Activated T-helper 1 cell treated with anti-CD3 and anti-CD28 coated beads, Interleukin-12 subunit alpha, Interleukin-12 subunit beta, Interleukin-2, Interleukin-4 antibody, amounts not matched to agents 30 ng/mL and 10 ng/mL and 1 ng/mL, durations not matched to agents 14 hours and 24 hours and 36 hours (primary cell): ENCODE measurements at regions of chr10 and their contacts with region 1.

Region 1: DNA sequence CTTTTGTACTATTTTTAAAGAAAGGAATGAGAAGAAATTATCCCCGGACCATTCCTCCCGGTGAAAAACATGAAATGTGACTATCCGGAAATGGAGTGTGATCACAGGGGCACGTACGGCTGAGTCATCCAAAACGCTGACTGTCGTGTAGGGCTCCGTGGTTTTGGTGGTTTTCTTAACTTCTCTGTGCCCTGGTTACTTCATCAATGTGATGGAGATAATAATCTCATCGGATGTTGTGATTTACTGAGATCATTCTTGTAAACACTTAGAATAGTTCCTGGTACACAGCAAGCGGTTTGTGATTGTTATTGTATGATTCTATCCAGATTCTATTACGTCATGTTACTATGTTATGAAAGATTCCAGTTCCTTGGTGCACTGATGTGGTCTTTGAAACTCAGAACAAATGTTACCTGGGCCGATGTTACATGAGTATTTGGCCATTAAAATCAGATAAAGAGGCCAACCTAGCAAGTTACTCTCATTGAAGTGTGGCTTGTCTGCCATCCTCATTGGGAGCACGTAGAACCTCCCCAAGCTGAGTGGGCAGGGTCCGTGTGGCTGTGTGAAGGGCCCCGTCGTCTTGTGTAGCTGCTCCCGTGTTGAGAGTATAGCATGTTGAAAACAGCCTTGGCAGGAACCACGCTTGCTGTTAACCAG is 99.5 kb downstream of the CAMK1D start:
- DNase-seq: peak; percentile 81
- H3K4me3 Mint-ChIP-seq: peak overlapping the region; percentile 64
- H3K27ac Mint-ChIP-seq: peak overlapping the region; percentile 72
- H3K4me1 Mint-ChIP-seq: peaks cover 31% of the 10 kb centered on the region
- H3K27me3 Mint-ChIP-seq: peaks cover 16% of the 10 kb centered on the region

Region 2: DNA sequence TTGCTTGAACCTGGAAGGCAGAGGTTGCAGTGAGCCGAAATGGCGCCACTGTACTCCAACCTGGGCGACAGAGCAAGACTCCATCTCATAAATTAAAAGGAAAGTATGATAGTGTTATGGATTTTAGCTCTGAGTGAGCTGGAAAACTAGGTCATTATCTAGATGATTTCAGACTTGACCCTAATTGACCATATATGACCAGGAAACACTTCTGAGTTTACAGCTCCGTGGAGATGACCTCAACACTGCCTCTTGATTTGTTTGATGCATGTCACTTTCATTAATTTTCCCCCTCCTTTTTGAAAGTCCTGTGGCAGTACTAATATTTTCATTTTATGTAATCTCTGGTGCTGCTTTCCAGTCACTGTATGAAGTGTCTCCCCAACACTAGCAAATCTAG is 327.2 kb before region 1 on chr10:
- intact Hi-C with region 1: loop called (anchors 5 kb)
- DNase-seq: no peak
- H3K4me3 Mint-ChIP-seq: peak overlapping the region; percentile 59
- H3K27ac Mint-ChIP-seq: peak overlapping the region; percentile 95
- H3K4me1 Mint-ChIP-seq: peaks cover 34% of the 10 kb centered on the region
- H3K27me3 Mint-ChIP-seq: no peaks in the 10 kb centered on the region

Region 3: GRCh38 chr10:12264204-12264940 is 184.5 kb before region 1 on chr10:
- intact Hi-C with region 1: loop called (anchors 1 kb)
- DNase-seq: peak; percentile 63
- H3K4me3 Mint-ChIP-seq: peak overlapping the region; percentile 82
- H3K27ac Mint-ChIP-seq: peak overlapping the region; percentile 98
- H3K4me1 Mint-ChIP-seq: peaks cover 23% of the 10 kb centered on the region
- H3K27me3 Mint-ChIP-seq: peaks cover 1% of the 10 kb centered on the region

Region 4: DNA sequence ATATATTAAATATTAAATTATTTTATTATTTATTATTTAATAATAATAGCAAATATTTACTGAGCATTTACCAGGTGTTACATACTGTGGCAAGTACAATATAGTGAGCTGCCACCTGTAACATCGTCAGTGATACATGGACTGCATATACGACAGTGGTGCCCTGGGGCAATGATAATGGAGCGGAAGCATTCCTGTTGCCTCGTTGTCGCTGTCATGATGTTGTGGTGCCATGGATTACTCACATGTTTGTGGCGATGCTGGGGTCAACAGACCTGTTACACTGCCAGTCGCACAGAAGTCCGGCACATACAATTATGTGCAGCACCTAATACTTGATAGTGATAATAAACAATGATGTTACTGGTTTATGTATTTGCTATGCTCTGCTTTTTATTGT is 78.9 kb before region 1 on chr10:
- intact Hi-C with region 1: loop called (anchors 1 kb)
- DNase-seq: no peak
- H3K4me3 Mint-ChIP-seq: no peak overlapping the region
- H3K27ac Mint-ChIP-seq: no peak overlapping the region
- H3K4me1 Mint-ChIP-seq: peaks cover 18% of the 10 kb centered on the region
- H3K27me3 Mint-ChIP-seq: no peaks in the 10 kb centered on the region

Region 5: GRCh38 chr10:12419262-12419847 is 29.5 kb before region 1 on chr10:
- intact Hi-C with region 1: loop called (anchors 1 kb)
- DNase-seq: peak; percentile 25
- H3K4me3 Mint-ChIP-seq: peak overlapping the region; percentile 5
- H3K27ac Mint-ChIP-seq: peak overlapping the region; percentile 58
- H3K4me1 Mint-ChIP-seq: peaks cover 18% of the 10 kb centered on the region
- H3K27me3 Mint-ChIP-seq: peaks cover under 1% of the 10 kb centered on the region

Region 6: DNA sequence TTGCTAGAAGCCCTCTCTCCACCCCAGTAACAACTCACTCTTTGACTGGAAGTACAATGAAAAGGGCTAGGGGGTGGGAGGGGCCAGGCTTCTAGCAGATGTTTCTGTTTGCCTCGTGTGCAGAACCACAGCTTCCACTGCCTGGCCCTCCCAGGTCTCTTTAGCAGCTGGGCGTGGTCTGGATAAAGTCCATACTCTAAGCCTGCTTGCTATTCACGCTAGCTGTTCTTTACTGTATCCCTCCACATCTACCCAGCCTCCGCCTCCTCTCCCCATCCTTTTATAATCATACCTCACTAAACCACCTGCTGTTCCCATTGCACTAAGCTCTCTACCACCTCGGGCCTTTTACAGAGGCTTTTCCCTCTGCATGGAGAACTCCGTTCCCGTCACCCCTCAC is 189.2 kb after region 1 on chr10:
- intact Hi-C with region 1: loop called (anchors 2 kb)
- DNase-seq: peak; percentile 49
- H3K4me3 Mint-ChIP-seq: peak overlapping the region; percentile 24
- H3K27ac Mint-ChIP-seq: peak overlapping the region; percentile 64
- H3K4me1 Mint-ChIP-seq: peaks cover 61% of the 10 kb centered on the region
- H3K27me3 Mint-ChIP-seq: peaks cover 2% of the 10 kb centered on the region

Region 7: DNA sequence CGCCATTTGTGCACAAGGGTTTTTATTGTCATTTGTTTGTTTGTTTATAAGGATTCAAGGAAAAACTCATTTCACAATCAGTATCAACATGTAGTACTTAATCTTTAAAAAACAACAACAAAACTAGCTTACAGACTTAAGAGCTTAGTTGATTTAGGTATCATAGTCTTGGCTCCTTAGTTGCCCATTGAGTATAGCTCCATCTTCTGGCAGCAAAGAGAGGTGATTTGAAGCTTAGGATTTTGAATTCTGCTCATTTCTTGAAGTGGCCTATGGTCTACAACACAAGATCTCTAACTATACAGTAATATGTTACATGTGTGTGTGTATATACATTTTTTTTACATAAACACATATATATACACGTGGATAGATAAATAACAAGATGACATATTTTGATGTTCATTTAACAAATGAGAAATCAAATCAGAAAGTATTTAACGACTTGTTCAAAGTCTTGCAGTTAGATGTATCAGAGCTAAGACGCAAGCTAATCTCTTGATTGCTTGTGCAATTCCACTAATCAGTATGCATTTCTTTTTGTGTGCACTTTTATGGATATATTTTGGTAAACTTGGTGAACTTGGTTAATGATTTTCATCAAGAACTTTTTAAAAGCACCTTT is 207.8 kb after region 1 on chr10:
- intact Hi-C with region 1: loop called (anchors 1 kb)
- DNase-seq: peak; percentile 6
- H3K4me3 Mint-ChIP-seq: no peak overlapping the region
- H3K27ac Mint-ChIP-seq: peak overlapping the region; percentile 34
- H3K4me1 Mint-ChIP-seq: peaks cover 34% of the 10 kb centered on the region
- H3K27me3 Mint-ChIP-seq: no peaks in the 10 kb centered on the region